ENCODE measurements at regions of chr1 and their contacts with region 1.

Region 1: DNA sequence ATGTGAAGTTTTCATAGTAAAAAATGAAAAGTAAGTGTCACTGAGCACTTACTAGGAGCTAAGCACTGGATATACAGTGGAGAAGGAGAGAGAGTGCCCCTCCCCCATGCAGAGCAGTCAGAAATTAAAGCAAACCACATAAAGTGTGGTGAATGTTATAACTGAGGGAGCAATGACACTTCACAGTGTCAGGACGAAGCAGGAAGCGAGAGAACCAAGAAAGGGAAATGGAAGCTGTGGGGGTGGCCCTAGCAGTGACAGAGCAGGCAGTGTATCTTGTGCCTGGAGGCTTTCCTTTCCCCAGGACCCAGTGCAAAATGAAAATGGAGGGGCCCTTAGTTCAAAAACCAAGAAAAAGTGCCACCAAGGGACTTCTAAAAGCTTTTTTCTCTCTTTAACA is 21.5 kb upstream of the RCAN3 start:
- DNase-seq: peak; percentile 88
- H3K4me3 Mint-ChIP-seq: peak overlapping the region; percentile 73
- H3K27ac Mint-ChIP-seq: peak overlapping the region; percentile 85
- H3K4me1 Mint-ChIP-seq: peaks cover 47% of the 10 kb centered on the region
- H3K27me3 Mint-ChIP-seq: no peaks in the 10 kb centered on the region

Region 2: DNA sequence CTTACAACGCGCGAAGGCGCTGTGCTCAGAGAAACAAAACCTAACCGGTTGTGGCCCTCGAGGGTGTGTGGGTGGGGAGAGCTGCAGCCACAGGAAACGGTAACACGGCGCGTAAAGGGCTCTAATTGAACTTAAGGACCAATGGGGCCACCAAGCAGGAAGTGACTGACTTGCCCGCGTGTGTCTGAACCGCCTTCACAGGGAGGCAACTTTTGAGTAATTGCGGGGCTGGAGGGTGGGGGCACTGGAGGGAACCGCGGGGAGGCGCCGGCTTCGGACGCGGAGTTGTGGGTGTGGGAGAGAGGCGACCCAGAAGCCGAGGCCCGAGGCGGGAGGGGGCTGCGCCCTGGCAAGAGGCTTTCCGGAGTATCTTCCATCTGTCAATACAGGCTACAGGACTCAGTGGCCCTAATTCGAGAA is 522.0 kb before region 1 on chr1:
- intact Hi-C with region 1: loop called (anchors 10 kb)
- DNase-seq: peak; percentile 97
- H3K4me3 Mint-ChIP-seq: peak overlapping the region; percentile 100
- H3K27ac Mint-ChIP-seq: peak overlapping the region; percentile 100
- H3K4me1 Mint-ChIP-seq: peaks cover 47% of the 10 kb centered on the region
- H3K27me3 Mint-ChIP-seq: no peaks in the 10 kb centered on the region

Region 3: GRCh38 chr1:24186993-24187805 is 293.9 kb before region 1 on chr1 and contains the start of gene IFNLR1:
- intact Hi-C with region 1: loop called (anchors 5 kb)
- DNase-seq: peak; percentile 90
- H3K4me3 Mint-ChIP-seq: peak within 1 kb of the TSS; percentile 82
- H3K27ac Mint-ChIP-seq: peak within 1 kb of the TSS; percentile 78
- H3K4me1 Mint-ChIP-seq: peaks cover 34% of the 10 kb centered on the region
- H3K27me3 Mint-ChIP-seq: peaks cover 2% of the 10 kb centered on the region
- total RNA-seq, gene IFNLR1: 5.3 and 5.6 TPM in 2 replicates

Region 4: GRCh38 chr1:24415334-24415909 is 65.7 kb before region 1 on chr1 and contains the start of gene NIPAL3:
- intact Hi-C with region 1: loop called (anchors 2 kb)
- DNase-seq: peak; percentile 99
- H3K4me3 Mint-ChIP-seq: peak within 1 kb of the TSS; percentile 88
- H3K27ac Mint-ChIP-seq: peak within 1 kb of the TSS; percentile 90
- H3K4me1 Mint-ChIP-seq: peaks cover 53% of the 10 kb centered on the region
- H3K27me3 Mint-ChIP-seq: no peaks in the 10 kb centered on the region
- total RNA-seq, gene NIPAL3: 25.1 and 26.3 TPM in 2 replicates

Region 5: DNA sequence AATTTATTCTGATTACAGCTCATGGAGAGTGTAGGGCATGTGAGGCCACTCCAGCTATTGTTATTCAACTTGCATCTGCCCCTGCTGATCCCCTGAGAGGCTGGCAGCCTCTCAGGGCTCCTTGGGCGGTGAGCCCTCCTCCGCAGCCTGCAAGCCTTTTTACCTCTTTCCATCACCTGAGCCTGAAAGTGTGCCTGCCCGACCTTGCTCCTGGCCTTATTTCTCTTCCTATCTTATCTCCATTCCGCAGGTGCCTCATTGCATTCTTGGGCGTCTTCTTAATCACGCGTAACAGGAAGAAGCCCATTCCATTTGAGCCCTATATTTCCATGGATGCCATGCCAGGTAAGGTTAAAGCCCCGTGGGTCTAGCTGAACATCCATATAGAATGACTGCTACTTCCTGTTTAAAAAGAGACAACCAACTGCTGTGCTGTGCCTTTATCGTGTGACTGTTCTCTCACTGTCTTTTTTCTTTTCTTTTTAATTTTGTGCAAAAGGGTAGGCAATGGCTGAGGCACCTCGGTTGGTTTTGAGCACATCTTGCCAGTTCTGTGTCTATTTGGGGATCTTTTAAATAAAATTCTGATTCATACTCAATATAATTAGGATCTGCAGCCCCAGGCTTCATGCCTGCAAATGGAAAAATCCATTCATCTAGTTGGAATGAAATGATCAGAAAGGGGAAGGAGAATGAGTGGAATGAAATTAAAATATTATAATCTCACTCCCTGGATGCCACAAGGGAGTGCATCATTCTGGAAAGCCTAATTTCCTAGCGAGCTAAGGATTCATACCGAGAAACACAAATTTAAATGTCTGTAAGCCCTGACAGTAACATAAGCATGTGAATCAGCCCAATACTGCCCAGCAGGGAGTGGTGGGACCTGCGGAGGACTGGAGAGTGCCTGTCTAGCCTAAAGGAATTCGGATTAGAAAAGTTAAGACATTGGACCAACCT is 17.0 kb before region 1 on chr1:
- intact Hi-C with region 1: no loop called
- DNase-seq: no peak
- H3K4me3 Mint-ChIP-seq: no peak overlapping the region
- H3K27ac Mint-ChIP-seq: no peak overlapping the region
- H3K4me1 Mint-ChIP-seq: peaks cover 14% of the 10 kb centered on the region
- H3K27me3 Mint-ChIP-seq: no peaks in the 10 kb centered on the region

Region 6: DNA sequence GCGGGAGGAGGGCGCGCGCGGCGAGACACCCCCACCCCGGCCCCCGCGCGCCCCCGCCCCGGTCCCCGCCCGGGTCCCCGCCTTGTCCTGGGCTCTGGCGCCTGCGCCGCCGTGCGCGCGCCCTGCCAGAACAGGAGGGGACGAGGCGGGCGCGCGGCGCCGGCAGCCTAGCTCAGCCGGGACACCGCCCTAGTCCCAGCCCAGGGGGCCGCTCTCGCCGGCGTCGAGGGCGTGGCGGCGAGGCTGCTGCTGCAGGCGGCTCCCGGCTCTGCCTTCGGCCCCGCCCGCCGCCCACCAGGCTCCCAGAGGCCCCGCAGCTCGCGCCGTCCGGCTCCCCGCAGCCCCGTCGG is 21.6 kb after region 1 on chr1 and contains the start of gene RCAN3:
- intact Hi-C with region 1: loop called (anchors 1 kb)
- DNase-seq: peak; percentile 97
- H3K4me3 Mint-ChIP-seq: peak within 1 kb of the TSS; percentile 95
- H3K27ac Mint-ChIP-seq: peak within 1 kb of the TSS; percentile 99
- H3K4me1 Mint-ChIP-seq: peaks cover 65% of the 10 kb centered on the region
- H3K27me3 Mint-ChIP-seq: no peaks in the 10 kb centered on the region
- total RNA-seq, gene RCAN3: 31.2 and 31.6 TPM in 2 replicates

Region 7: DNA sequence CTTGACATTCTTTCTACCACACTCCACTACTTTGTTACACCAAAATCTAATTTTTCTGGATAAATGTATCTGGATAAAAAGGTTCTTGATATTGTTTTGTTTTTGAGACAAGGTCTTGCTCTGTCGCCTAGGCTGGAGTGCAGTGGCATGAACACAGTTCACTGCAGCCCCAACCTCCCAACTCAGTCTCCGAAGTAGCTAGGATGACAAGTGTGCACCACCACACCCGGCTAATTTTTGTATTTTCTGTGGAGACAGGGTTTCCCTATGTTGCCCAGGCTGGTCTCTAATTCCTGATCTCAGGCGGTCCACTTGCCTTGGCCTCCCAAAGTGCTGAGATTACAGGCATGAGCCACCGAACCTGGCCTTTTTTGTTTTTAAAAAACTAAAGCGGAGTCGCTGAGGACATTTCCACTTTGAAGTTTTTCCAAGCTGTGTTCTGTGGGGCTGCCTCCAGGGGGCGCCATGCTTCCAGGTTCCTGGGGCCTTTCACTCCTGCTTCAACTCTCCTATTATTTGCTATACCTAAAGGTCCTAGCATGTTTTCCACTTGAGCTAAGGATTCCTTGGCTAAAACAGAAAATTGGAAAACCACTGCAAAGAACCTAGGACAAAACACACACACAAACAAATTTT is 60.7 kb after region 1 on chr1:
- intact Hi-C with region 1: loop called (anchors 2 kb)
- DNase-seq: peak; percentile 76
- H3K4me3 Mint-ChIP-seq: peak overlapping the region; percentile 34
- H3K27ac Mint-ChIP-seq: peak overlapping the region; percentile 28
- H3K4me1 Mint-ChIP-seq: peaks cover 43% of the 10 kb centered on the region
- H3K27me3 Mint-ChIP-seq: no peaks in the 10 kb centered on the region

Region 8: DNA sequence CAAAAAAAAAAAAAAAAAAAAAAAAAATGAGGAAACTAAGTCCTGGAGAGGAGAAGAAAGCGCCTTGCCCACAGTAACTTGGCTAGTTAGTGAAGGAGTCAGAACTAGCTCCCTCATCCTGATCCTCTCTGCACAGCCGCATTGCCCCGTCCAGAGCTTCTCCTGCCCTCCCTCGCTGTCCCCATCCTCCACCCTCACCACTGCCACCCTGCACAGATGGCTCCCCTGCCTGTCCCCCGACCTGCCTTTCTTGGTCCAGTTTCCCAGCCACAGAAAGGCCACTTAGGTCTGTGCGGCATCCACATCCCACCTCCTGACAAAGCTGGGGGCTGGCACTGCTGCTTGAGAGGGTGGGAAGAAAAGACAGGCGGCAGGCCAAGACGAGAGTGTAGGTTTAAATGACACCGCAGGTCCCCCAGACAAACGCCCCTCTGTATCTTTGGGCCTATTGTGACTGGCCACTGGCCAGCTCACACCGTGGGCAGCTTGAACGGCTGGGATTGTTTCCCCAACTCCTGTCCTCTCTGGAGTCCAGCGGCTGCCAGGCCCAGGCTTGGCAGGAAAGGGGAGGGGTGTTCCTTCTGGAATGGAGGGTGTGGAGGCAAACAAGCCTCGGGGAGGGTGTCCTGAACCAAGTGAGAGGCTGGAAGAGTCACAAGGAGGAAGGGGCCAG is 95.0 kb after region 1 on chr1:
- intact Hi-C with region 1: no loop called
- DNase-seq: no peak
- H3K4me3 Mint-ChIP-seq: no peak overlapping the region
- H3K27ac Mint-ChIP-seq: no peak overlapping the region
- H3K4me1 Mint-ChIP-seq: no peaks in the 10 kb centered on the region
- H3K27me3 Mint-ChIP-seq: peaks cover 3% of the 10 kb centered on the region

Region 9: GRCh38 chr1:24688621-24689195 is 207.6 kb after region 1 on chr1:
- intact Hi-C with region 1: no loop called
- DNase-seq: peak; percentile 89
- H3K4me3 Mint-ChIP-seq: no peak overlapping the region
- H3K27ac Mint-ChIP-seq: no peak overlapping the region
- H3K4me1 Mint-ChIP-seq: peaks cover 2% of the 10 kb centered on the region
- H3K27me3 Mint-ChIP-seq: peaks cover 7% of the 10 kb centered on the region

Measured in activated CD4-positive, alpha-beta T cell treated with anti-CD3 and anti-CD28 coated beads, Interleukin-2, amount 10 ng/mL, durations not matched to agents 24 days and 14 days (primary cell).